GM10248 (cell line): ENCODE measurements at regions of chr9 and their contacts with region 1.

Region 1: GRCh38 chr9:114587385-114588202 is at the start of gene ATP6V1G1:
- DNase-seq: peak; percentile 96
- CTCF ChIP-seq: peak; percentile 16

Region 2: DNA sequence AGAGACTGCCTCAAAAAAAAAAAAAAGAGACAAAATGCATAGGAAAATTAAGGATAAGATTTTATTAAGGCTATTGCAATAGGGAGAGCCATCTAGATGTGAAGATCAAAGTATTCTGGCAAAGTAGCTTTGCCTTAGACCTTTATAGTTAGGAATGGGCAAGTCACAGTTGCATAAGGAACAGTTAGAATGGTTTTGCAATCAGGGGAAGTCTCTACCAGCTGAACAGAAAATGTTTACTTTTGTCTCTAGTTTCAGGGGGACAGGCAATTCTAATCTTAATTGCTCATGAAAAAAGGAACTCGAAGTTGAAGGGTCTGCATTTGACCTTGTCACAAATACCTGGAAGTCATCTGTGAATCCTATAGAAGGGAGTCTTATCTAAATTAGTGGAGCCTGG is 13.2 kb before region 1 on chr9:
- CTCF ChIA-PET with region 1: interaction called, 11 read pairs
- POLR2A ChIA-PET with region 1: interaction called, 5 read pairs
- DNase-seq: no peak
- CTCF ChIP-seq: no peak

Region 3: DNA sequence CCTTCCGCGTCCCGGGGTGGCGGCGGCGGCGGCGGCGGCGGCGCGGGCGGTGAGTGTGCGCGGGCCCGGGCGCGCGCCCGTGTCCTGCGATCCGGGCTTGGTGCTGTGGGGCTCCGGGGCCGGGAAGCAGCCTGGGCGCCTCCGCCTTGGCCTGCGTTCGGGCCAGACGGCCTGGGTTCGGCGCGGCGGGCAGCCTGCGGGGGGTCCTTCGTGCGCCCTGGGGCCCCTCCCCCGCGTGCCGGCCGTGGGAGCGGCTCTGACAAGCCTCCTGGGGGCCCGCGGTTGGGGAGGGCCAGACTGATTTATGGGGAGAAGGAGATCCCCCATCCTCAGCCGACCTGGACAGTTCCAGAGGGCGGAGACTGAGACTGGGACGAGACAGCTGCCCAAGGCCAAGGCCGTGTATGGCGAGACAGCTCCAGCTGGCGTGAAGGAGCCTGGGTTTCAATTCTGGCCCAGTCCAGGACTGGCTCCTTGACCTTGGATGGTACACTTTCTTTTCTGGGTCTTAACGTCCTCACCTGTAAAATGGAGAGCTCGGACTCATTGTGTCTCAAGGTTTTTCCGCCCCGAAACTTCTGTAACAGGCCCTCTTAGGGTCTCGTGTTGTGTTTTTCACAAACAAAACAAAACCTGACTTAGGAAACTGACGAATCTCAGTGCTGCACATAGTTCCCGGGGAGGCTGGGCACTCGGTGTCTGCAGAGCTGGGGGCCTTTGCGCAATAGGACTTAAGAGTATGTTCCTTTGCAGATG is 24.1 kb after region 1 on chr9:
- CTCF ChIA-PET with region 1: interaction called, 65 read pairs
- POLR2A ChIA-PET with region 1: interaction called, 3 read pairs
- DNase-seq: peak; percentile 48
- CTCF ChIP-seq: no peak

Region 4: DNA sequence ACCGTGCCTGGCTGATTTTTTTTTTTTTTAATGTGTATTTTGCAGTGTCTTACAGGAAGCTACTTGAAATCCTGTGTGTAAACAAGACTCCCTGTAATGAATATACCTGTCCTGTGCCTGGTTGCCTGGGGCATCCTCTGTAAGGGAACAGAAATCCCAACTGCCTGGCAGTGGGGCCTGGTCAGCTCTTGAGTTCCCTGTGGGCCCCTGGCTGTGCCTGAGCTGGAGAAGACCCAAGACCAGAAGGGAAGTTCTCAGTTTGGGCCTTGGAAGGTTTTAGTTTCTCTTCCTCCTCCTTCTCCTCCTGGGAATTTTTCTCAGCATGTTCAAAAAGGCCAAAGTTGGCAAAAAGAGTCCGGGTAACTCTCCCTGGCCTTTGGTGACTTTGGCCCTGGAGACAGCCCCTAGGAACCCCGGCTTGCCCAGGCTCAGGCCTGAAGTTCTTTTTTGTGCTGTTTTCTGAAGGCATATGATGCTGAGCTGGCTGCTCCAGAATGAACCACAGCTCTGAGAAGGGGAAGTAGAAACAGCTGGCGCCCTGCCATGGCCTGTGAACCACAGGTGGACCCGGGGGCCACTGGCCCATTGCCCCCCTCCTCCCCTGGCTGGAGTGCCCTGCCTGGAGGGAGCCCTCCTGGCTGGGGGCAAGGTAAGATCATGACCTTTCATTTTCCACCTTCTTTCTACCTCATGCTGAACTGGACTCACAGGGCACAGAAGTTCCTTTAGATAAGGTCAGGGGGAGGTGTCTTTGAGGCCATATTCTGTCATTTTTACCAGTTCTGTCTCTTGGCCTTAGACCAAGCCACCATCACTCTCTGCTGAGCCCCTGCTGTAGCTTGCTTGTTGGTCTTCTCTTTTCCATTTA is 29.3 kb after region 1 on chr9:
- CTCF ChIA-PET with region 1: interaction called, 28 read pairs
- POLR2A ChIA-PET with region 1: interaction called, 3 read pairs
- DNase-seq: peak; percentile 68
- CTCF ChIP-seq: no peak